ENCODE measurements at regions of chr7 and their contacts with region 1.

Region 1: GRCh38 chr7:106493041-106493731 is 167.8 kb downstream of the CCDC71L start:
- DNase-seq: no peak
- H3K4me3 ChIP-seq: no peak overlapping the region
- H3K27ac ChIP-seq: no peak overlapping the region
- H3K4me1 ChIP-seq: no peaks in the 10 kb centered on the region
- H3K27me3 ChIP-seq: no peaks in the 10 kb centered on the region
- CTCF ChIP-seq: no peak

Region 2: GRCh38 chr7:106392590-106392989 is 100.6 kb before region 1 on chr7:
- CTCF ChIA-PET with region 1: no interaction called
- dilution Hi-C with region 1: no loop called
- in situ Hi-C with region 1: no loop called
- intact Hi-C with region 1: no loop called
- DNase-seq: peak; percentile 43
- H3K4me3 ChIP-seq: no peak overlapping the region
- H3K27ac ChIP-seq: no peak overlapping the region
- H3K4me1 ChIP-seq: no peaks in the 10 kb centered on the region
- H3K27me3 ChIP-seq: no peaks in the 10 kb centered on the region
- CTCF ChIP-seq: no peak

Region 3: GRCh38 chr7:106775552-106775936 is 282.4 kb after region 1 on chr7:
- CTCF ChIA-PET with region 1: interaction called, 36 read pairs
- dilution Hi-C with region 1: no loop called
- in situ Hi-C with region 1: no loop called
- intact Hi-C with region 1: no loop called
- DNase-seq: peak; percentile 87
- H3K4me3 ChIP-seq: no peak overlapping the region
- H3K27ac ChIP-seq: peak overlapping the region; percentile 59
- H3K4me1 ChIP-seq: peaks cover 30% of the 10 kb centered on the region
- H3K27me3 ChIP-seq: no peaks in the 10 kb centered on the region
- CTCF ChIP-seq: no peak

Measured in mammary epithelial cell (primary cell).